CD4-positive, alpha-beta memory T cell (primary cell): ENCODE measurements at regions of chr6 and their contacts with region 1.

Region 1: DNA sequence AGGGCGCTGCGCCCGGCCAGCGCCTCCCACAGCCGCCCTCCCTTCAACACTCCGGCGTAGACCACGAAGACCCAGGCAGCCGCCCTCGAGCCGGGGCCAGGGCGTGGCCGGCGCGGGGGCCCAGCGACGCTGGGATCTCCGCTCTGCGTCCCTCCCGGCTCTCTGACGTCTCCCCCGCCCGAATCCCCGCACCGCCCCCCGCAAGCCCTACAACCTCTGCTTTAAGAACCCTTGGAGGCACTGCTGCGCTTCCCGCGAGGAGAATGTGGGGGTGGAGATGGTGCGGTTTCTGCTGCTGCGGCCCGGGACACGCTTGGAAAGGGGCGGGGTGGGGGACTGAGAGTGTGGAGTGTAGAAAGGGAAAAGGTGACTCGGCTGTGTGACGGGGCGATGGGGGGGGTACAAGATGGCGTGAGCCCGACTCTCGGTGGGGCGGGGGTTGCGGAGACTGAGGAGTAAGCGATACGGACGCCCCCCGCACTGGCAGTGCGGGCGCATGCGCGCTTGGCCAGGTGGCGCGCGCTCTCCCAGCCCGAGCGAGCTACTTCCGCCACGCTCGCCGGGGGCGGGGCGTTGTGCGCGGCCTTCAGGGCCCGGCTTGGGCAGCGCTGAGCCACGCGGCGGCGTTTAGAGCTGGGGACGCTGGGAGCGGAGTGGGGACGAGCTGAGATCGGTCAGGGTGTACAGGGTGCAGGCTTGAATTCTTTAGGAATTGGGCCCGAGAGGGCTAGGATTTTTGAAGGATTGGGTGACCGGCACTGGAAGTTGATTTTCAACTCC is at the start of gene SUPT3H:
- DNase-seq: peak; percentile 88 to 96 (median 90)
- H3K4me3 ChIP-seq: peak within 1 kb of the TSS; percentile 72 to 96
- H3K4me3 Mint-ChIP-seq: peak within 1 kb of the TSS; percentile 93 to 99 (median 96)
- H3K27ac ChIP-seq: peak within 1 kb of the TSS; percentile 96
- H3K27ac Mint-ChIP-seq: peak within 1 kb of the TSS; percentile 95 to 99 (median 98)
- H3K4me1 ChIP-seq: peaks cover 17% of the 10 kb centered on the region
- H3K4me1 Mint-ChIP-seq: peaks cover 8 to 30% (median 19%) of the 10 kb centered on the region in 4 donors
- H3K27me3 ChIP-seq: no peaks in the 10 kb centered on the region
- H3K27me3 Mint-ChIP-seq: no peaks in the 10 kb centered on the region
- total RNA-seq, gene SUPT3H: 11.8 to 12.6 TPM

Region 2: DNA sequence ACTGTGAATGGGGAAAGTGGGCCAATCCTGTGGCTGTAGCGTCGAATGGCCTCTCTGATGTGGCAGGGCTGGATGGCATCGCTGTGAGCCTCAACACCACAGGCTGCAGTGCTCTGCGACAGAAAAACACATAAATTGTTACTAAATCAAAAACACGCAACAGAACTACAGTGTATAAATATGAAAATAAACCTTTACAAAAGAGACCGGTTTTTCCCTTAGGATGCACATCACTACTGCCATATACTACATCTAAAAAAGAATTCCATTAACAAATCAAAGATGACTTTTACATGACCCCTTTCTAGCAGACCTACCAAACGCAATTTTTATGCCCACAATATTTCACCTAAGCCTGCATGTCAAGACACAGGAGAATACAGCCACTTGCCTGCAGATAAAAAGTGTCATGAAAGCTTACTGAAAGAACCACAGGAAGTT is 445.1 kb before region 1 on chr6:
- CTCF ChIA-PET with region 1: interaction called, 3 read pairs
- POLR2A ChIA-PET with region 1: interaction called, 9 read pairs
- intact Hi-C with region 1: loop called (anchors 1 kb)
- DNase-seq: peak; percentile 52 to 76 (median 60)
- H3K4me3 ChIP-seq: peak overlapping the region in 1 of 2 donors; percentile 23
- H3K4me3 Mint-ChIP-seq: peak overlapping the region; percentile 86 to 97 (median 92)
- H3K27ac ChIP-seq: peak overlapping the region; percentile 68
- H3K27ac Mint-ChIP-seq: peak overlapping the region; percentile 91 to 99 (median 97)
- H3K4me1 ChIP-seq: peaks cover 57% of the 10 kb centered on the region
- H3K4me1 Mint-ChIP-seq: peaks cover 33 to 59% (median 44%) of the 10 kb centered on the region in 4 donors
- H3K27me3 ChIP-seq: no peaks in the 10 kb centered on the region
- H3K27me3 Mint-ChIP-seq: no peaks in the 10 kb centered on the region

Region 3: GRCh38 chr6:44976719-44977641 is 400.8 kb before region 1 on chr6:
- CTCF ChIA-PET with region 1: no interaction called
- POLR2A ChIA-PET with region 1: interaction called, 6 read pairs
- intact Hi-C with region 1: loop called (anchors 2 kb)
- DNase-seq: peak; percentile 64 to 81 (median 74)
- H3K4me3 ChIP-seq: no peak overlapping the region
- H3K4me3 Mint-ChIP-seq: peak overlapping the region; percentile 47 to 78 (median 68)
- H3K27ac ChIP-seq: no peak overlapping the region
- H3K27ac Mint-ChIP-seq: peak overlapping the region; percentile 54 to 92 (median 81)
- H3K4me1 ChIP-seq: peaks cover 45% of the 10 kb centered on the region
- H3K4me1 Mint-ChIP-seq: peaks cover 24 to 61% (median 40%) of the 10 kb centered on the region in 4 donors
- H3K27me3 ChIP-seq: no peaks in the 10 kb centered on the region
- H3K27me3 Mint-ChIP-seq: no peaks in the 10 kb centered on the region